ENCODE measurements at regions of chr17 and their contacts with region 1.

Region 1: GRCh38 chr17:29622337-29623282 is at the start of gene CORO6:
- DNase-seq: peak; percentile 74
- H3K4me3 Mint-ChIP-seq: peak within 1 kb of the TSS; percentile 78
- H3K27ac Mint-ChIP-seq: peak within 1 kb of the TSS; percentile 85
- H3K4me1 Mint-ChIP-seq: peaks cover 60% of the 10 kb centered on the region
- H3K27me3 Mint-ChIP-seq: no peaks in the 10 kb centered on the region
- total RNA-seq, gene CORO6: 21.3 to 22.1 TPM

Region 2: GRCh38 chr17:29140051-29140621 is 482.5 kb before region 1 on chr17:
- CTCF ChIA-PET with region 1: no interaction called
- POLR2A ChIA-PET with region 1: no interaction called
- intact Hi-C with region 1: loop called (anchors 5 kb)
- DNase-seq: peak; percentile 93
- H3K4me3 Mint-ChIP-seq: peak overlapping the region; percentile 93
- H3K27ac Mint-ChIP-seq: peak overlapping the region; percentile 97
- H3K4me1 Mint-ChIP-seq: peaks cover 69% of the 10 kb centered on the region
- H3K27me3 Mint-ChIP-seq: no peaks in the 10 kb centered on the region

Region 3: GRCh38 chr17:29524460-29525091 is 98.0 kb before region 1 on chr17:
- CTCF ChIA-PET with region 1: no interaction called
- POLR2A ChIA-PET with region 1: no interaction called
- intact Hi-C with region 1: no loop called
- DNase-seq: no peak
- H3K4me3 Mint-ChIP-seq: no peak overlapping the region
- H3K27ac Mint-ChIP-seq: no peak overlapping the region
- H3K4me1 Mint-ChIP-seq: no peaks in the 10 kb centered on the region
- H3K27me3 Mint-ChIP-seq: no peaks in the 10 kb centered on the region

Region 4: GRCh38 chr17:29640413-29640812 is 17.8 kb after region 1 on chr17:
- CTCF ChIA-PET with region 1: interaction called, 40 read pairs
- POLR2A ChIA-PET with region 1: interaction called, 6 read pairs
- intact Hi-C with region 1: no loop called
- DNase-seq: no peak
- H3K4me3 Mint-ChIP-seq: no peak overlapping the region
- H3K27ac Mint-ChIP-seq: peak overlapping the region; percentile 3
- H3K4me1 Mint-ChIP-seq: peaks cover 27% of the 10 kb centered on the region
- H3K27me3 Mint-ChIP-seq: no peaks in the 10 kb centered on the region

Region 5: GRCh38 chr17:29664743-29665480 is 42.3 kb after region 1 on chr17:
- CTCF ChIA-PET with region 1: interaction called, 16 read pairs
- POLR2A ChIA-PET with region 1: interaction called, 3 read pairs
- intact Hi-C with region 1: loop called (anchors 2 kb)
- DNase-seq: no peak
- H3K4me3 Mint-ChIP-seq: no peak overlapping the region
- H3K27ac Mint-ChIP-seq: peak overlapping the region; percentile 84
- H3K4me1 Mint-ChIP-seq: peaks cover 33% of the 10 kb centered on the region
- H3K27me3 Mint-ChIP-seq: no peaks in the 10 kb centered on the region

Region 6: DNA sequence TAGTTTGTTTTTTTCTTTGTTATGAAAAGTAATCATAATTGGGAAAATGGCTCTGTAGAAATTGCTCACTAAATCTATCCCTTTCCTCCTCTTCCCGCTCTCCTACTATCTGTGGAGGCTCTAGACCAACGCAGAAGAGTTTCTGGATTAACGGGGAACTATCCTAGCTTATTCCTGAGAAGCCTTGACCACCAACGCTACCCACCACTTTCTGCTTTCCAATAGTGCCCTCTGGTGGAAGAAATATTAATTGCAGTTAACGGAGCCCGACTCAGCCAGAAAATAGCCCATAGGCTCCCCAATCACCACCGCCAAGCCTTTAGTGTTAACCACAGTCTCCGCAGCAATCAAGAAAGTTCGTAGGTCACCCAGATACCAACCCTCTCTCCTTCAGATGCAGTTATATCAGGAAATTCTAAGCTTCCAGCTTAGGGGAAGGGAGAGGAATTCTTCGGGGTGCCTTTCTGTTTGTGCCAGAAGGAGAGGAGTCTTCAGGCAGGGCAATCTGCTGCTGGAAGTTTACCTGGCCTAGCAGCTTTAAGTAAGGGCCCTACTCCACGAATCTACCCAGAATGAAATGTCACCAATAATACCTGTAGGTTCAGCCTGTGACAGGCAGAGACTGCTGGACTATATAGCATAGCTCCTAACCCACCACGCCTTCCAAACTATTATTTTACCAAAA is 471.0 kb after region 1 on chr17:
- CTCF ChIA-PET with region 1: interaction called, 4 read pairs
- POLR2A ChIA-PET with region 1: no interaction called
- intact Hi-C with region 1: loop called (anchors 10 kb)
- DNase-seq: peak; percentile 46
- H3K4me3 Mint-ChIP-seq: no peak overlapping the region
- H3K27ac Mint-ChIP-seq: no peak overlapping the region
- H3K4me1 Mint-ChIP-seq: peaks cover 4% of the 10 kb centered on the region
- H3K27me3 Mint-ChIP-seq: peaks cover 13% of the 10 kb centered on the region